ENCODE measurements at regions of chr13 and their contacts with region 1.

Region 1: DNA sequence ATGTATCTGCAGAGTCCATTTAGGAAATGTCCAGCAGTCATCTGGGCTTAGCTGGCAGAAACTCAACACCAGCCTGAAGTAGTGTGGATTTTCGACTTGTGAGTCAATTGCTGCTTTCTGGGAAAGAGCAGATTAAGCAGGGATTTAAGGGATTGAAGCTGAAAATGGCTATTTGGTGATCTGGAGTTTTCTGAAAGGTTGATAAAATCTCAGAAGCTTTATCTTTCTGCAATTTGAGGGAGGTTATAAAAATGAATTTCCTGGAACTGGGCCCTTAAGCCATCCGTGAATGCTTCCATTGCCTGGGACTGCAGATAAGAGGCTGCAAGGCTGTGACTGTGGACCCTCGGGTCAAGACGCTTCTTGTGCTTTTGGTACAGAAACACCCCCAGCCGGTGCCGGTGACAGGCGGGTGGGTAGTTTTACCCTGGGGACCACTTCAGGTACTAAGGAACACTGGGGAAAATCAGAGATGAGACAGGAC is 61.5 kb downstream of the COL4A1 start:
- DNase-seq: no peak
- H3K4me3 ChIP-seq: no peak overlapping the region
- CTCF ChIP-seq: no peak

Region 2: DNA sequence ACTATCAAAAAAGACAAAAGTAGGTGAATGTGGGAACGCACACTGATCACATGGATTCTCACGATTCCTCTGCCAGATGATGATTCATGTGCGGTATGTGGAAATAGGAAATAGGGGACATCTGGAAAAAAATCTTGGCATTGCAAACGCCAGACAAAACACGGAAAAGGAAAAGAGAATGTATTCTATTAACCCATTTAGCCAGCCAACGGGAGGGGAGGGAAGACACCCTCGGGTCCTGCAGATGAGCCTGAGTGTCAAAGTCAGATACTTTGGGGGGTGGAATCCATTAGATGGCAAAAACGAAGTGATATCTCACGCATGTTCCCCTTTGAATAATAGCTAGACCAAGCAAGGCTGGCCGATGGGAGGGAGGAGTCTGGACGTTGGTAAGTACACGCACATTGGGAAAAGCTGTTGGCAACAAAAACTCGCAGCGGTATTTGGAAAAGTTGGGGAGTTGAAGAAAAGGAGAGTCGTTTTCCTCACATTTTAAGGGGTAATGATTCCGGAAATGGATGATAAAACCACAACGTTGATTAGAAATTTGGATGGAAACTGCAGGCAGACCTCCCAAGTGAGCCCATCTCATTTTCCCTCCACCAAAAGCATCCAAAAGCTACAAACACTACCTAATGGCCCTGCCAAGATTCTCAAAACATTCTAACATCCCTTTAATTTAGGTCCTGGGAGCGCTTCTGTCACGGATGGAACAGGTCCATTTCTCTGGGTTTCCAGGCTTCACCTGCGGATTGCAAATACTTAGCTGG is 12.1 kb before region 1 on chr13:
- CTCF ChIA-PET with region 1: interaction called, 31 read pairs
- POLR2A ChIA-PET with region 1: interaction called, 3 read pairs
- DNase-seq: no peak
- H3K4me3 ChIP-seq: no peak overlapping the region
- CTCF ChIP-seq: no peak

Region 3: GRCh38 chr13:110258876-110259631 is 13.6 kb after region 1 on chr13:
- CTCF ChIA-PET with region 1: interaction called, 21 read pairs
- POLR2A ChIA-PET with region 1: no interaction called
- DNase-seq: no peak
- H3K4me3 ChIP-seq: no peak overlapping the region
- CTCF ChIP-seq: no peak

Region 4: DNA sequence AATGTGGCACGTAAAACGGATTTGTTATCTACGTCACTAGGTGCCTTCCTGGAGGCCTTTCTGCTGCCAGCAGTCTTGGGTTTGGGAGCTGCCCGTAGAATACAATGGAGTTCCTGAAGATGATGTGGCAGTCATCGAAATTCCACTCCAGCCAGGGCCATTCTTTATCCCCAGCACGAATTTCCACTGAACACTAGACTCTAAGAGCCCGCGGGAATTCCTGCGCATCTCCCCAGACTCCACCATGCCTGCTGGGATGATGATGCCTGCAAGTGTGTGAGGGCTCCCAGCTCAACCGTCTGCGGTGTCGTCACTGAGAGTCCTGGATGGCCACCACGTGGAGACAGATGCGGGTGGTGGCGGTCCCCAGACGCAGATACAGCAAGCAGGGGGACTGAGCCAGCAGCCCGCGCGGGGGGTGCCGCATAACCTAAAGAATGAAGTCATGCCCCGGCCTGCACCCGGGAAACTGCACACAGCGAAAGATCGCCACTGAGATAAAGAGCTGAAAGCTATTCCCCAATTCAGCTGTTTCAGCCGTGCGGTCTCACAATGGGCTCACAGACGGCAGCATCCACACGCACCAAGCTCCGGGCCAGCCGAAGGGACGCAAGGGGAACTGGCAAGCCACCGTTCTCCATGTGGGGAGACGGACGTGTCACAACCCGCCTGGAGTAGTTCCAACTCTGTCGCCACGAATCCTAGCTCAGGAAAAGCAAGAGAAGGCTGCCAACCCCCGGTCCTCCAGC is 20.4 kb after region 1 on chr13:
- CTCF ChIA-PET with region 1: interaction called, 21 read pairs
- POLR2A ChIA-PET with region 1: no interaction called
- DNase-seq: no peak
- H3K4me3 ChIP-seq: no peak overlapping the region
- CTCF ChIP-seq: no peak

Region 5: DNA sequence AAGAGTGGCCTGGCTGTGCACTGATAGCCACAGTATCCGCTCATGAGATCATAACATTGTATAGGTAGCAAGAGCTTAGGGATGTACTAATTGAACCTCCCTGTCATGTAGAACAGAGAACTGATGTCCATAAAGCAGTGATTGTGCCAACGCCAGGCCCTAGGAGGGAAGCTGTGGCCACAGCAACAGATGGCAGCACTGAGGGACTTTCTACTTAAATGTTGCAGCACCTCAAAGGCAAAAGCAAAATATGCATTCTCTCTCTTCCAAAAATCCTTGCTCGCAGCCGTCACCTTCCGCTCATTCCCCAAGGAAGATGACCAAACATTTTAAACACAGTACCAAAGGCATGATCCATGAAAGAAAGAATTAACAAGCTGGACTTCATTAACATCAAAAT is 29.2 kb after region 1 on chr13:
- CTCF ChIA-PET with region 1: interaction called, 10 read pairs
- POLR2A ChIA-PET with region 1: no interaction called
- DNase-seq: no peak
- H3K4me3 ChIP-seq: no peak overlapping the region
- CTCF ChIP-seq: peak; percentile 42

Region 6: GRCh38 chr13:110301606-110302553 is 56.4 kb after region 1 on chr13:
- CTCF ChIA-PET with region 1: interaction called, 15 read pairs
- POLR2A ChIA-PET with region 1: interaction called, 8 read pairs
- DNase-seq: peak; percentile 65
- H3K4me3 ChIP-seq: peak overlapping the region; percentile 16
- CTCF ChIP-seq: no peak

Region 7: DNA sequence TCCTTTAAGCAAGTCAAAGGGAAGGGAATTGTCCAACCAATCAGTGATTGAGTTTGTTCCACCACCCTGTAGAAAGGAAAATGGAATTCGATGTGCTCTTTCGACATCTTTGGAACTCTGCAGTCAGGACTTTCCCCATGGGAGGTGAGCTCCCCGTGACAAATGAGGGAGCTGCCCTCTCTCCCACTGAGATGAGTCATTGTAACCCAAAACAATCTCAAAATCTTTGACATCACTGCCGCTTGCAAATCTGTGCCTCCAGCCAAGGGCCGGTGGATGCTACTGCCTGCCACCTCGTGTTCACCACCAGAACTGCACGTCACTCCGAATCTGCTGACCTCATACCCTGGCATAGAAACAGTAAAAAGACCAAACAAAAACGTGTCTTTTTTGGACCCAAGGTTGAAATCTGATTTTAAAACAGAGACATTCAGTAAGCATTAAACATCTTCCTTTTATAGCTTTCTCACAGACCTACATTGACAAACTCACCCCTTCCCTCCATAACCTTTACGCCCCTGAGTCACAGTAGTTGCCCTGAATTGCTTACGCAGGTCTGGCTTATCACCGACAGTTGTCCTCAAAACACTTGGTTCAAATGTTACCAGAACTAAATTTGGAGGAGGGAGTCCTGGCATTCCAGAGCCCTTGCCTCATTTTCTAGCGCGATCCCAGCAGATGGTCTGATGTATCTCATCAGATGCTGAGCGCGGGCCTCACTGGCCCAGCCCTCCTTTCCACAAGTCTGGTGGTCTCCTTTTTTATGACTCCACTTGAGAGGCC is 166.9 kb after region 1 on chr13:
- CTCF ChIA-PET with region 1: interaction called, 18 read pairs
- POLR2A ChIA-PET with region 1: no interaction called
- DNase-seq: peak; percentile 99
- H3K4me3 ChIP-seq: no peak overlapping the region
- CTCF ChIP-seq: peak; percentile 87

Measured in AG04449 (cell line).